Spleen (tissue), 13 donors: ENCODE measurements at regions of chr4 and their contacts with region 1.

Region 1: DNA sequence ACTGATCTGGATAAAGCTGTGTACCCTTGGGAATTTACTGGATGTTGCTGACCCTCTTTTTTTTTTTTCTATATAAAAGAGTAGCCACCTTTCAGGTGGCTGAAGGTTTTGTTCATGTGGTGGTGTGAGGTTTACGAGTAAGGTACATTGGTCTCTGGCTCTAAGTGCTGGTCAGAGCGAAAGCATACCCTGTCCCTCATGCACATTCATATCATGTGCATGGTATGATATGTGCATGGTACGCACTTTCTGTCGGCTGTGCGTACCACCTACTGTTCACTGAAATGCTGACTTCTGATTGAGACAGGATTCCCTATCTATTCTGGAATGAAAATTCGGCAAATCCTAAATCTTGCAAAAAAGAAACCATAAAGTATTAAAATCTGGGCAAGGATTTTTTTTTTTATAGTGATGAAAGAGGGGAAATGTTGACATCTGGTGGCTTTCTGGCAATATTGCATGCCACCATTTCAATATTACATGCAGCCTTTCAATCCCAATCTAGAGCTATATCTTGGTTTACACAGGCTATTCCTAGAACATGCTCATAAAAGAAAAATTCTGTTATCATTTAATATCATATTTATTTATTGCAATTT is 32.8 kb downstream of the FAM149A start:
- DNase-seq: no peak
- H3K4me3 ChIP-seq: peak overlapping the region in 1 of 8 donors; percentile 41
- H3K27ac ChIP-seq: no peak overlapping the region
- H3K4me1 ChIP-seq: peaks cover 0 to 6% (median 0%) of the 10 kb centered on the region in 6 donors
- H3K27me3 ChIP-seq: peaks cover 0 to under 1% (median 0%) of the 10 kb centered on the region in 7 donors
- CTCF ChIP-seq: peak; percentile 30 to 73 (median 61)
- POLR2A ChIP-seq: no peak

Region 2: DNA sequence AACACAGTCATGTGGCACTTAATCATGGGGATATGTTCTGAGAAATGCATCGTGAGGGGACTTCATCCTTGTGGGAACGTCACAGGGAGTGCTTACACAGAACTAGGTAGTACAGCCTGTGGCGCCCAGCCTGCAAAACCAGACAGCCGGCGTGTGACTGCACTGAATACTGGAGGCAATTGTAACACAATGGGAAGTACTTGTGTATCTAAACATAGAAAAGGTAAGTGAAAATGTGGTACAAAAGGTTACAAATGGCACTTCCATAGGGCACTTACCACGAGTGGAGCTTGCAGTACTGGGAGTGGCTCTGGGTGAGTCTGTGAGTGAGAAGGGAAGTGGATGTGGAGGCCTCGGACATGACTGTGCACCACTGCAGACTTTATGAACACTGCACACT is 63.1 kb before region 1 on chr4:
- intact Hi-C with region 1: loop called (anchors 5 kb)
- DNase-seq: peak; percentile 73
- H3K4me3 ChIP-seq: no peak overlapping the region
- H3K27ac ChIP-seq: peak overlapping the region in 3 of 8 donors; percentile 5 to 43 (median 29)
- H3K4me1 ChIP-seq: peaks cover 0 to 28% (median 8%) of the 10 kb centered on the region in 6 donors
- H3K27me3 ChIP-seq: no peaks in the 10 kb centered on the region
- CTCF ChIP-seq: no peak
- POLR2A ChIP-seq: no peak

Region 3: DNA sequence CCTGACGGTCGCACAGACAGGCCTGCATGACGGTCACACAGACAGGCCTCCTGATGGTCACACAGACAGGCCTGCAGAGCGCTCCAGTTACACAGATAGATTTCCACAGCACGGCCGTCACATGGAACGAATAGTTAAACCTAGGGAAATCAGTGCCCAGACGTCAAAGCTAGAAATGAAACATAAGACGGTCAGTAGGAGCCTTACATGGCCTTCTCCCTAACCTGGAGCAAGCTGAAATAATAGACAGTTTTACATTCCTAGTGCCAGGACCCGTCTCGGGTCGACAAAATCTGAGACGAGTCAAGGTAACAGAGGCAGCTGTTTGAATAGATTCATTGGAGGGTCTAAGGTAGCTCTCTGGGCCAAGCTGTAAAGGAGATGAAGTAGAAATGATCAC is 291.2 kb after region 1 on chr4:
- intact Hi-C with region 1: no loop called
- DNase-seq: no peak
- H3K4me3 ChIP-seq: no peak overlapping the region
- H3K27ac ChIP-seq: no peak overlapping the region
- H3K4me1 ChIP-seq: no peaks in the 10 kb centered on the region
- H3K27me3 ChIP-seq: no peaks in the 10 kb centered on the region
- CTCF ChIP-seq: no peak
- POLR2A ChIP-seq: no peak